H1 (cell line): ENCODE measurements at regions of chr9 and their contacts with region 1.

Region 1: DNA sequence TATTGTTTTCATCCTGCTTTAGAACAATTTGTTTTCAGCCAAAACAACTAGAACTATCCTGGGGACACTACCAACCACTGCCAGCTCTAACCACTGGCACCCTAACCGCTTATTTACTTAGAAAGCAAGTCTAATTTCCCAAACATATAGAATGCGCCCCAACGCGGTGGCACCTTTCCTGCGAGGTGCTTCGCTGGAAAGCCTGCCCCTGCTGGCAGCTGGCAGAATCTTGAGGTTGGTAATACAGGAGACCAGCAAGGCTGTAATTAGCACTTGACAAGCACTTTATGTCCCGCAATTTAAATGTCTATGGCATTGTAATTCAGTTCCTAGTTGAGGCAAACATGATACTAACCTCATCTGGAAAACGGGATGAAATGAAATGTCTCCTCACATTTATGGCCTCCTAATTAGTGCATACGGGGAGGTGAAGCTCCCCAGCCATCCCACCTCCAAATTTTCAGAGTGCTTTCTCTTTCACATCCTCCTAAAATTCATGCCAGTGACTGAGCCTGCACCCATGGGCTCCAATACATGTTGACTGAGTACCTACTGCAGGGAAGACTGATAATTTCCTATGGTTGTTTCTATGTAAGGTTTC is 30.4 kb downstream of the GABBR2 start:
- DNase-seq: peak; percentile 46 to 67
- H3K4me3 ChIP-seq: peak overlapping the region in 1 of 4 experiments; percentile 34; a peak in 2 of 8 replicates
- H3K27ac ChIP-seq: no peak overlapping the region
- H3K4me1 ChIP-seq: peaks cover 0 to 10% (median 6%) of the 10 kb centered on the region in 4 experiments; a peak in 6 of 7 replicates
- H3K27me3 ChIP-seq: no peaks in the 10 kb centered on the region; a peak in 3 of 7 replicates
- CTCF ChIP-seq: peak; percentile 82 to 86 (median 85)
- EP300 ChIP-seq: no peak
- POLR2A ChIP-seq: no peak
- RAD21 ChIP-seq: peak; percentile 47 to 64

Region 2: GRCh38 chr9:98549401-98549800 is 128.9 kb before region 1 on chr9:
- CTCF ChIA-PET with region 1: no interaction called
- POLR2A ChIA-PET with region 1: no interaction called
- DNase-seq: no peak
- H3K4me3 ChIP-seq: no peak overlapping the region
- H3K27ac ChIP-seq: no peak overlapping the region
- H3K4me1 ChIP-seq: no peaks in the 10 kb centered on the region
- H3K27me3 ChIP-seq: no peaks in the 10 kb centered on the region
- CTCF ChIP-seq: no peak
- EP300 ChIP-seq: no peak
- POLR2A ChIP-seq: no peak
- RAD21 ChIP-seq: no peak

Region 3: DNA sequence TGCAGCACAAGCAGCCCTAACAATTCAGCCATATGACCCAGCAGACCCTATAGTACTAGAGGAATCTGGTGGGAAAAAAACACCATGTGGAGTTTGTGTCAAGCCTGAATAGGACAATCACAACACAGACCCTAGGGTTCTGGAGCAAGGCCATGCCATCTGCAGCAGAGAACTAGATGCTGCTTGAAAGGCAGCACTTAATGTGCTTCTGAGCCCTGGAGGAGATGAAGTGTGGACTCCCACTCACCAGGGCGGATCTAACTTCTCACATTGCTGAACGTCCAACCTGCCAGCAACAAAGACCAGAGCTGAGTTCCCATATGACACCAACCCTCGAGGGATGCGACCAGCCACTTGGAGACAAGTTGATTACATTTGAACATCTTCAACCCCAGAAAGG is 12.8 kb before region 1 on chr9:
- CTCF ChIA-PET with region 1: interaction called, 18 read pairs
- POLR2A ChIA-PET with region 1: interaction called, 3 read pairs
- DNase-seq: no peak
- H3K4me3 ChIP-seq: no peak overlapping the region
- H3K27ac ChIP-seq: no peak overlapping the region
- H3K4me1 ChIP-seq: peaks cover 0 to 6% (median 0%) of the 10 kb centered on the region in 4 experiments; a peak in 1 of 7 replicates
- H3K27me3 ChIP-seq: no peaks in the 10 kb centered on the region
- CTCF ChIP-seq: no peak
- EP300 ChIP-seq: no peak
- POLR2A ChIP-seq: no peak
- RAD21 ChIP-seq: no peak

Region 4: DNA sequence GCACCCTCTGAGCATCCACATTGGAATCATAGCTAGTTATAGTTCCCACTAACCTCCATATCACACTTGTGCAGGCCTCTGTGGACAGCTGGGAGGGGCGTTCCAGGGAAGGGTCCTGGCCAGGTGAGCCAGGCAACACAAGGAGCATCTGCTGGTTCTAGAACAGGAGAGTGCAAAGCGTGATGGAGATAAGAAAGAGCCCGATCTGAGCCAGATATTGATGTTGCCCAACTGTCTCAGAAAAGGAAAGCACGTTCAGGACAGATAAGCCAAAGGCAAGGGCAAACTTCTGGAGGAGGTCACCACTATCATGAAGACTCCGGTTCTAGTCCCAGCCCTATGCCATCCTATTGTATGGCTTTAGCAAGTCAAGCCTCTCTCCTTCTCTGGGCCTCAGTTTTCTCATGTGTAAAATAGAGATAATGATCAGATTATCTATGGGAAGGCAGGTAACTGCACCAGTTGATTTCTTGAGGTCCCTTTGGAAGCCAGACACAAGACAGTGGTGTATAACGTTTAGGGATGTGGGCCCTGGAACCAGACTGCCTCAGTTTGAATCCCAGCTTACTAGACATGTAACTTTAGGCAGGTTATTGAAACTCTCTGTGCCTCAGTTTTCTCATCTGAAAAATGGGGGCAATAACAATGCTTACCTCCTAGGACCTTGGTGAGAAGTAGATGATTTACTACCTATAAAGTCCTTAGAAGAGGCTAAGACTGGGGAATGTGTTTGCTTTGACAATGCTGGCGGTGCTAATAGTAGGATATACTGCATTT is 10.6 kb after region 1 on chr9:
- CTCF ChIA-PET with region 1: interaction called, 32 read pairs
- POLR2A ChIA-PET with region 1: no interaction called
- DNase-seq: no peak
- H3K4me3 ChIP-seq: no peak overlapping the region
- H3K27ac ChIP-seq: no peak overlapping the region
- H3K4me1 ChIP-seq: no peaks in the 10 kb centered on the region; a peak in 1 of 7 replicates
- H3K27me3 ChIP-seq: no peaks in the 10 kb centered on the region
- CTCF ChIP-seq: no peak
- EP300 ChIP-seq: no peak
- POLR2A ChIP-seq: no peak
- RAD21 ChIP-seq: no peak